Left cardiac atrium (tissue), 4 donors: ENCODE measurements at regions of chr16 and their contacts with region 1.

Region 1: DNA sequence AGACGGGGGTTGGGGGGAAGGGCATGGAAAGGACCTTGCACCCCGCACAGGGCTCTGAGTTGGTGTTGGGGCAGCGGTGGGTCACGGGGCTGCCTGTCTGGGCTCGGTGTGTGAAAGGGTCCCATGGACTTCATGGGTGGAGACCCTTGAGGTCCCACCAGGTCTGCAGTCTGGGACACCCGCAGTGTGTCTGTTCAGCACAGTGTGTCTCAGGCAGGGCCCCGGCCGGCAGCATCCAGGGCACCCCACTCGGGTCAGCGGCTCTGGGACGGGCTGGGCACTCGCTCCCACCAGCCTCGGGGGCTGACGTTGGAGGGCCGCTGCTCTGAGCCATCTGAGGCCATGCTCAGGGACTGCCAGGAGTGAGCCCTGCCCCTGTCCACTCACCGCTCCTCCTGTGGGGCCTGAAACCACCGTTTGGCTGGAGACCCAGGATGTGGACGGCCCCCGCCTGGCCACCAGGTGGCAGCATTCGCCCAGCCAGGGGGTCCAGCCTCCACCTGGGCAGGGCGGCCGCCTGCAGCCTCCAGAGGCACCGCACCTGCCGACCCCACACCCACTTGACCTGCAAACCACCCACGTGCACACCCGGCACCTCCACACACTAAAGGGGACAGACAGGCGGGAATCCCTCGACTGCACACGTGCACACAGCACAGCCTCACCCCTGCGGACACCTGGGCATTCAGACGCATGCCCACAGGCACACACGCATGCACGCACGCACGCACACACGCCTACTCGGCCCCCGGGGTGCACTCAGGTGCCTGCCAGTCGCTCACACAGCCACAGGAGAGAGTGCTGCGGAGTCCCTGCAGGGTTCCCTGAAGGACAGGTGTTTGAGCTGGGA is 10.1 kb upstream of the ZFPM1 start:
- DNase-seq: peak; percentile 79
- ATAC-seq: peak; percentile 89 to 90

Region 2: GRCh38 chr16:88527186-88527936 is 84.4 kb after region 1 on chr16:
- intact Hi-C with region 1: loop called (anchors 1 to 5 kb)
- DNase-seq: peak; percentile 77
- ATAC-seq: peak; percentile 59 to 70

Region 3: DNA sequence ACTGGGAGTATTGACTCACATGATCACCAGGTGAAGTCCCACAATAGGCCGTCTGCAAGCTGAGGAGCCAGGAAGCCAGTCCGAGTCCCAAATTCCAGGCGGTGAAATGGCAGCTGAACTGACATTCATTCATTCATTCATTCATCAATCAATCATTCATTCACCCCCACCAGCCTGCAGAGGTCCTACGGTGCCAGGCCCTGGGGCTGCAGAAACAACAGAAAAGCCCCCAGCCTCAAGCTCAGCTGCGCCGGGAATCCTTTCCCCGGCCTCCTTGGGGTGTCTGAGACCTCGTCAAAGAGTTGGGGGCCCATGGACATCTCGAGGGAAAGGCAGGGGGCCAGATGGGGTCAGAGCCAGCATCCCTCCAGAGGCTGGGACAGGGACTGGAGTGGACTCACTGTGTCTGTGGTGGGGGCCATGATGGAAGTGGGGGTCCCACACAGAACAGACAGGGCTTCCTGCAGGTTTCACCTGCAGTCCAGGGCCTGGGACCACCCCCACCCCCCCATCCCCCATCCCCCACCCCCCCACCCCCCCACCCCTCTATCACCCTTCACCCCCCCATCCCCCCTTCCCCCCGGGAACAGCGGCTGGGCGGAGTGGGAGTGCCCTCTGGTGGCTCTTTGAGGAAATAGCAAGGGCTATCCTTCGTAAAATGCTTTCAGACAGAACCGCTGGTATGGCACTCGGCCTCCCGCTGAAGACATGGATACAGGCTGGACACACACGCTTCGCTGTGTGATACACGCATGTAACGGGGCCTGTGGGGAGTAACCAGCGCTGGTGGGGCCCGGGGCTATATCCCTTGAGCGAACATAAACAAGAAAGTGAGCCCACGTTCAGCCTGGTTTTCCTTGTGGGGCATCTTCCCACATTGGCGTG is 118.8 kb after region 1 on chr16:
- intact Hi-C with region 1: loop called (anchors 2 kb)
- DNase-seq: peak; percentile 44
- ATAC-seq: peak; percentile 56 to 59

Region 4: GRCh38 chr16:88650749-88651275 is 207.9 kb after region 1 on chr16 and contains the start of gene CYBA:
- intact Hi-C with region 1: no loop called
- DNase-seq: peak; percentile 78
- ATAC-seq: peak; percentile 89 to 91
- total RNA-seq, gene CYBA: 58.9 to 131 TPM